ENCODE measurements at regions of chr6 and their contacts with region 1.

Region 1: GRCh38 chr6:109705258-109705657 is 14.2 kb downstream of the FIG4 start:
- DNase-seq: peak; percentile 88
- H3K4me3 ChIP-seq: no peak overlapping the region
- H3K27ac ChIP-seq: no peak overlapping the region
- H3K4me1 ChIP-seq: peaks cover 2% of the 10 kb centered on the region
- CTCF ChIP-seq: peak; percentile 100

Region 2: DNA sequence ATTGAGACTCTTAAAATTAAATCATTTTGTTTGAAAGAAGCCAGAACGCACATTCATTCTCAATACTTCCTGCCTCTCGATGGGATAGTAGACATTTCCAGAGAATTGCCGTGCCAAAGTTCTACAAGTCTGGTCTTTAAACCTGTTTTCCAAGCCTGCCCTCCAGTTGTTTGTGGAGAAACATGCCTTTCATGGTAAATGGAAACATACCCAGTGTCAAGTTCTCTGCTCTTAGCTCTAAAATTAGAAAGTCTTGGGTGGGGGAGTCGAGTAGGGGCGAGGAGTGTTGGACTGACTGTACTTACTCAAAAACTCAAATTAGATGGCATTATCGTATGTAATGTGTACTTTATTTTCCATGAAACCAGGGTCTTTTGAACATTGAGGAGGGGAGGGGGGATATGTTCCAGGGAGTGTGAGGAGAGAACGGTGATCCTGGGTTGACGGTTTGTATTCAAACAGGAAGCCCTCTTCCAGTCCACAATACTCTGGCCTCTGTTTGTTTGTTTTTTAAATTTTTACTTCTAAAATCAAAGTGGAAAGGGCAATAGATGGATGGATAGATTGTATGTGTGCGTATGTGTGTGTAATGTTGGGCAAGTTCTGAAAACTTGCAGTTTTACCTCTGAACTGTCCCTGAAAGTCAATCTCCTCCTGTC is 963.8 kb before region 1 on chr6:
- CTCF ChIA-PET with region 1: no interaction called
- POLR2A ChIA-PET with region 1: interaction called, 10 read pairs
- intact Hi-C with region 1: no loop called
- DNase-seq: no peak
- H3K4me3 ChIP-seq: no peak overlapping the region
- H3K27ac ChIP-seq: no peak overlapping the region
- H3K4me1 ChIP-seq: no peaks in the 10 kb centered on the region
- CTCF ChIP-seq: no peak

Region 3: DNA sequence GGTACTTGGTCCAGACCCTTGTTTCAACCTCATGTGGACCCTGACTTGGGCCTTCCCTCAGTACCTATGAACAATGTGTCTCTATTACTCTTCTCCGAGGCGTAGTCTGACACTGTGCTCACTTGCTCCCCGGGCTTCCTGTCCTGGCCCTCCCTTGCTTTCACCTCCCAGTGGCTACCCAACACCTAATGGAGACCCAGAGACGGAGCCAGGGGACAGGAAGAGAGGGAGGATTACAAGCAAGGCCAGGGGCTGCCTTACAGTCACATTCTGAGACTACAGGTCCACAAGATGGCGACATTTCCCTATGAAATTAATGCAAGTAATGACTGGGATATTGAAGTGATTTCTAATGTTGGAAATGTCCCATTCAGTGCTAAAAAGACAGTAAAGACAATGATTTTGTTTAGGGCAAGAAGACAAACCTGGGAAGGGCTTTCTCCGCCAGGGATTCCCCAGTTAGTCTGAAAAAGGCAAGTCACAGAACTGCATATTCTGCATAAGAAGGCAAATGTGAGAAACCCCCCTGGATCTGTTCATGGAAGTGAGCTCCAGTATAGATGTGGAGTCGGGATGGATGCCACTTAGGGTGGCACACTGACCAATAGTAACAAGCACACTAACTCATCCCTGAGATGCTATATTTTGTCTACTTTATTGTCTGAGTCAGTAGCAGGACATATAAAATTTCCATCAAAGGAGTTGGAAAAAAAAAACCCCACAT is 178.2 kb before region 1 on chr6:
- CTCF ChIA-PET with region 1: no interaction called
- POLR2A ChIA-PET with region 1: no interaction called
- intact Hi-C with region 1: loop called (anchors 5 kb)
- DNase-seq: peak; percentile 76
- H3K4me3 ChIP-seq: no peak overlapping the region
- H3K27ac ChIP-seq: no peak overlapping the region
- H3K4me1 ChIP-seq: no peaks in the 10 kb centered on the region
- CTCF ChIP-seq: peak; percentile 87

Region 4: GRCh38 chr6:109896341-109896740 is 191.1 kb after region 1 on chr6:
- CTCF ChIA-PET with region 1: no interaction called
- POLR2A ChIA-PET with region 1: no interaction called
- intact Hi-C with region 1: no loop called
- DNase-seq: no peak
- H3K4me3 ChIP-seq: no peak overlapping the region
- H3K27ac ChIP-seq: no peak overlapping the region
- H3K4me1 ChIP-seq: no peaks in the 10 kb centered on the region
- CTCF ChIP-seq: no peak

Region 5: GRCh38 chr6:110039364-110039980 is 334.2 kb after region 1 on chr6:
- CTCF ChIA-PET with region 1: interaction called, 25 read pairs
- POLR2A ChIA-PET with region 1: interaction called, 8 read pairs
- intact Hi-C with region 1: loop called (anchors 1 kb)
- DNase-seq: peak; percentile 92
- H3K4me3 ChIP-seq: peak overlapping the region; percentile 58
- H3K27ac ChIP-seq: peak overlapping the region; percentile 42
- H3K4me1 ChIP-seq: peaks cover 15% of the 10 kb centered on the region
- CTCF ChIP-seq: peak; percentile 96

Region 6: GRCh38 chr6:110053395-110054240 is 348.4 kb after region 1 on chr6:
- CTCF ChIA-PET with region 1: no interaction called
- POLR2A ChIA-PET with region 1: no interaction called
- intact Hi-C with region 1: loop called (anchors 1 kb)
- DNase-seq: peak; percentile 61
- H3K4me3 ChIP-seq: no peak overlapping the region
- H3K27ac ChIP-seq: no peak overlapping the region
- H3K4me1 ChIP-seq: peaks cover 15% of the 10 kb centered on the region
- CTCF ChIP-seq: peak; percentile 88

Region 7: GRCh38 chr6:110101885-110102284 is 396.6 kb after region 1 on chr6:
- CTCF ChIA-PET with region 1: no interaction called
- POLR2A ChIA-PET with region 1: interaction called, 10 read pairs
- intact Hi-C with region 1: no loop called
- DNase-seq: peak; percentile 86
- H3K4me3 ChIP-seq: peak overlapping the region; percentile 22
- H3K27ac ChIP-seq: peak overlapping the region; percentile 63
- H3K4me1 ChIP-seq: peaks cover 26% of the 10 kb centered on the region
- CTCF ChIP-seq: no peak

Region 8: GRCh38 chr6:110389689-110390382 is 684.6 kb after region 1 on chr6:
- CTCF ChIA-PET with region 1: no interaction called
- POLR2A ChIA-PET with region 1: interaction called, 4 read pairs
- intact Hi-C with region 1: loop called (anchors 1 kb)
- DNase-seq: peak; percentile 9
- H3K4me3 ChIP-seq: no peak overlapping the region
- H3K27ac ChIP-seq: no peak overlapping the region
- H3K4me1 ChIP-seq: no peaks in the 10 kb centered on the region
- CTCF ChIP-seq: no peak

Region 9: DNA sequence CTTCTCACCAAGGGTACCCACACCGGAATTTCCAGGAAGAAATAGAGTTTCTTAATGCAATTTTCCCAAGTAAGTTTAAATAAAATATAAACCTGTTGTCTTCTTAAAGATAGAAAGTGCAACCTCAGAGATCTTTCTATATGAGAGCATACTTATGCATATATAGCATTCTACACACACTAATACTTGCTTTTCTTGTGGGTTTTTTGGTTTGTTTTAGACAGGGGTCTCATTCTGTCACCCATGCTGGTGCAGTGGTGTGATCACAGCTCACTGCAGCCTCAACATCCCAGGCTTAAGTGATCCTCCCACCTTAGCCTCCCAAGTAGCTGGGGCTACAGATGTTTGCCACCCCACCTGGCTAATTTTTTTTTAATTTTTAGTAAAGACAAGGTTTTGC is 1185.0 kb after region 1 on chr6:
- CTCF ChIA-PET with region 1: no interaction called
- POLR2A ChIA-PET with region 1: no interaction called
- intact Hi-C with region 1: no loop called
- DNase-seq: no peak
- H3K4me3 ChIP-seq: no peak overlapping the region
- H3K27ac ChIP-seq: no peak overlapping the region
- H3K4me1 ChIP-seq: peaks cover 16% of the 10 kb centered on the region
- CTCF ChIP-seq: no peak